B cell (primary cell): ENCODE measurements at regions of chr16 and their contacts with region 1.

Region 1: DNA sequence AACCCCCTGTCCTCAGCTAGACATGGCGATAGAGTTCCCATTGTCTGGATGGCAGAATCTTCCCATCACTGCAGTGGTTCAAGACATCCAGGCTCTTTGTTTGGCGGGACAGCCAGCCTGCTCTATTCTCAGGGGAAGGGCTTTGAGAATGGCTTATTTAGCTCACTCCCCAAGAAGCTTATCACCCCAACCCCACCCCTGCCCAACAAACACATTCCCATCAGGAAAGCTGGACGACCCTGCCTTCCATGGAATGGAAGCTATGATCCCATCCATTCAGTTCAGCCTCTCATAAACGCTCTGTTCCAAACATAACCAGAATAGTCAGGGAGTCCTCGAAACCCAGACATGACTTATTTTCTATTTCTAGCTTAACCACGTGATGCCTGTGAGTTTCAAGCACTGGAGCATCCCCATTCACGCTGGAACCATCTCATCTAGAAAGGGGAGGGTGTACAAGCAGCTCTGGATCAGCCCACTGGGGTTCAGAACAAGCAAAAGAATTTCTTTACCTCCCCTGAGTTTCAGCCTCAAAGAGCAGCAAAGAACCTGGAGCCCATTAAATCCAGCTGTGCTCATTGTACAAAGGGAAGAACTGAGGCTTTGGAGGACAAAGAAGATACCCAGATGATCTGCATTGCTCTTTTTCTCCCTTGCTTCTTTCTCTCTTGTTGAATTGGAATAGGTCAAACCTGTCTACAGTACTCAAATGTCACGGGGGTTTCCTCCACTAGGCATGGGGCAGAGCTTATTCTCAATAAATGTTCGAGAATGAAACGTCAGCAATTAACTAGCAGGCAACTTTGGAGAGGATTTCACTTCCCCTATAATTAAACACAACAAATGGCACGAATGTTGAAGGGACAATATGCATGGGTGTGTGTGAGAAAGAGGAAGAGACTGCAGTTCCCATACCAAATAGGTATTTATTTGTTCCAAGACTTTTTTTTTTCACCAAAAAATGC is 93.1 kb downstream of the XYLT1 start:
- DNase-seq: peak; percentile 90
- ATAC-seq: peak; percentile 90
- H3K4me3 ChIP-seq: peak overlapping the region in 2 of 5 experiments; percentile 27 to 30
- H3K4me3 Mint-ChIP-seq: peak overlapping the region; percentile 66
- H3K27ac ChIP-seq: peak overlapping the region; percentile 84 to 89
- H3K27ac Mint-ChIP-seq: peak overlapping the region; percentile 77
- H3K4me1 ChIP-seq: peaks cover 61 to 81% of the 10 kb centered on the region in 2 donors
- H3K4me1 Mint-ChIP-seq: peaks cover 72% of the 10 kb centered on the region
- H3K27me3 ChIP-seq: no peaks in the 10 kb centered on the region
- H3K27me3 Mint-ChIP-seq: no peaks in the 10 kb centered on the region
- CTCF ChIP-seq: no peak

Region 2: DNA sequence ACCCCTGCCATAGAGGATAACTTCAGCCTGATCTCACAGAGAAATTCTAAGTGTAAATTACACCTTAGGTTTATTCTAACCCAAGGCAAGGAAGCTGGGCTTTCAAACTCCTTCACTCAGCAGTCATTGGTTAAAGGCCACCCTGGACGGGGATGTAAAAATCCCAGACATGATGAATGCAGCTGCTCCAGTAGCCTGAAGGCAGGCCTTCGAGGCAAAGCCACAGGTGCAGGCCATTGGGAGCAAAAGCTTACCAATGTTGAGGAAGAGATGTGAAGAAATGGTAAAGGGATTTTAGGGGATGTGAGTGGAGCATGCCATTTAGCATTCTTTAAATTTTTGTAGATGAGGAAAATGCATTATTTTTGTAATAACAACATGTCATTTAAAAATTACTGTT is 421.3 kb before region 1 on chr16:
- CTCF ChIA-PET with region 1: no interaction called
- POLR2A ChIA-PET with region 1: no interaction called
- intact Hi-C with region 1: no loop called
- DNase-seq: no peak
- ATAC-seq: no peak
- H3K4me3 ChIP-seq: no peak overlapping the region
- H3K4me3 Mint-ChIP-seq: no peak overlapping the region
- H3K27ac ChIP-seq: no peak overlapping the region
- H3K27ac Mint-ChIP-seq: no peak overlapping the region
- H3K4me1 ChIP-seq: no peaks in the 10 kb centered on the region
- H3K4me1 Mint-ChIP-seq: no peaks in the 10 kb centered on the region
- H3K27me3 ChIP-seq: peaks cover 0 to 5% (median 0%) of the 10 kb centered on the region in 4 experiments
- H3K27me3 Mint-ChIP-seq: peaks cover 9% of the 10 kb centered on the region
- CTCF ChIP-seq: no peak

Region 3: DNA sequence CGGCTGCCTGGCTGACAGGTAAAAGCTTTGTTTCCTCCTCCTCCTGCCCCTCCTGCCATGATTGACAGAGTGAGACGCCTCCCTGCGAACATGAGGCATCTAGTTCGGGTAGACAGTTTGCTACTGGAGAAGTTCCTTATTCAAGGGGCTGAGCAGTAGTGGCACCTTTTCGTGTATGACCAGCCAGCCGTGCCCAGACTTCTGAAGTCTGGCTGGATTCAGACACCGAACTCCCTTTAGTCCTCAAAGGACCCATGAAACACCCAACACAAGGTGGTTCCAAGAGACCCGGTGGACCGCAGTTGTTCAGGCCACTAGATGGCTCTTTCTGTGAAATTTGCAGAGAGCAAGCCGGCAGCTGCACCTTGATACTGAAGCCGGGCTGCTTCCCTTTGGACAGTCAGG is 99.7 kb before region 1 on chr16:
- CTCF ChIA-PET with region 1: interaction called, 11 read pairs
- POLR2A ChIA-PET with region 1: no interaction called
- intact Hi-C with region 1: no loop called
- DNase-seq: peak; percentile 69
- ATAC-seq: peak; percentile 60
- H3K4me3 ChIP-seq: peak overlapping the region in 1 of 5 experiments; percentile 20
- H3K4me3 Mint-ChIP-seq: peak overlapping the region; percentile 35
- H3K27ac ChIP-seq: no peak overlapping the region
- H3K27ac Mint-ChIP-seq: no peak overlapping the region
- H3K4me1 ChIP-seq: peaks cover 59 to 60% of the 10 kb centered on the region in 2 donors
- H3K4me1 Mint-ChIP-seq: peaks cover 77% of the 10 kb centered on the region
- H3K27me3 ChIP-seq: no peaks in the 10 kb centered on the region
- H3K27me3 Mint-ChIP-seq: no peaks in the 10 kb centered on the region
- CTCF ChIP-seq: peak; percentile 53

Region 4: DNA sequence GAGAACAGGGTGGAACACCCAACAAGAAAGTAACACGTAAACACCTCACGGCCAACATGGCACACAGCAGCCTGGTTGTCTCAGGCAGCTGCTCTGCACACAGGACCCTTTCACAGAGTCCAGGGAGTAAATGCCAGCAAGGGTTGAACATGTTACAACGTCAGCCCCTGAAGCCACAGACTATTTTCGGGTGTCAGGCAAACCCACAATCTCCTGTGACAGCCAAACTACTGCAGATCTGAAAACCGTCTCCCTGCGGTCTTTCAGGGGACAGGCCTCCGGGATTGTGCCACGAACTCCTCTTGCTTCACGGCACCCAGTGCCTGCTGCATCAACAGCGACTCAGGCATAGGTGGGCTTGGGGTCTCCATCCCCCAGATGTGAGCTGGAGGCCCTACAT is 34.6 kb before region 1 on chr16:
- CTCF ChIA-PET with region 1: interaction called, 4 read pairs
- POLR2A ChIA-PET with region 1: no interaction called
- intact Hi-C with region 1: loop called (anchors 2 kb)
- DNase-seq: peak; percentile 69
- ATAC-seq: peak; percentile 63
- H3K4me3 ChIP-seq: peak overlapping the region in 2 of 5 experiments; percentile 14 to 17
- H3K4me3 Mint-ChIP-seq: peak overlapping the region; percentile 66
- H3K27ac ChIP-seq: peak overlapping the region; percentile 62 to 72
- H3K27ac Mint-ChIP-seq: peak overlapping the region; percentile 87
- H3K4me1 ChIP-seq: peaks cover 73 to 80% of the 10 kb centered on the region in 2 donors
- H3K4me1 Mint-ChIP-seq: peaks cover 68% of the 10 kb centered on the region
- H3K27me3 ChIP-seq: no peaks in the 10 kb centered on the region
- H3K27me3 Mint-ChIP-seq: no peaks in the 10 kb centered on the region
- CTCF ChIP-seq: no peak

Region 5: GRCh38 chr16:17364319-17365210 is 13.1 kb before region 1 on chr16:
- CTCF ChIA-PET with region 1: interaction called, 18 read pairs
- POLR2A ChIA-PET with region 1: interaction called, 6 read pairs
- intact Hi-C with region 1: loop called (anchors 1 kb)
- DNase-seq: peak; percentile 58
- ATAC-seq: no peak
- H3K4me3 ChIP-seq: no peak overlapping the region
- H3K4me3 Mint-ChIP-seq: peak overlapping the region; percentile 40
- H3K27ac ChIP-seq: peak overlapping the region; percentile 18 to 93
- H3K27ac Mint-ChIP-seq: peak overlapping the region; percentile 23
- H3K4me1 ChIP-seq: peaks cover 99 to 100% of the 10 kb centered on the region in 2 donors
- H3K4me1 Mint-ChIP-seq: peaks cover 93% of the 10 kb centered on the region
- H3K27me3 ChIP-seq: no peaks in the 10 kb centered on the region
- H3K27me3 Mint-ChIP-seq: no peaks in the 10 kb centered on the region
- CTCF ChIP-seq: no peak

Region 6: DNA sequence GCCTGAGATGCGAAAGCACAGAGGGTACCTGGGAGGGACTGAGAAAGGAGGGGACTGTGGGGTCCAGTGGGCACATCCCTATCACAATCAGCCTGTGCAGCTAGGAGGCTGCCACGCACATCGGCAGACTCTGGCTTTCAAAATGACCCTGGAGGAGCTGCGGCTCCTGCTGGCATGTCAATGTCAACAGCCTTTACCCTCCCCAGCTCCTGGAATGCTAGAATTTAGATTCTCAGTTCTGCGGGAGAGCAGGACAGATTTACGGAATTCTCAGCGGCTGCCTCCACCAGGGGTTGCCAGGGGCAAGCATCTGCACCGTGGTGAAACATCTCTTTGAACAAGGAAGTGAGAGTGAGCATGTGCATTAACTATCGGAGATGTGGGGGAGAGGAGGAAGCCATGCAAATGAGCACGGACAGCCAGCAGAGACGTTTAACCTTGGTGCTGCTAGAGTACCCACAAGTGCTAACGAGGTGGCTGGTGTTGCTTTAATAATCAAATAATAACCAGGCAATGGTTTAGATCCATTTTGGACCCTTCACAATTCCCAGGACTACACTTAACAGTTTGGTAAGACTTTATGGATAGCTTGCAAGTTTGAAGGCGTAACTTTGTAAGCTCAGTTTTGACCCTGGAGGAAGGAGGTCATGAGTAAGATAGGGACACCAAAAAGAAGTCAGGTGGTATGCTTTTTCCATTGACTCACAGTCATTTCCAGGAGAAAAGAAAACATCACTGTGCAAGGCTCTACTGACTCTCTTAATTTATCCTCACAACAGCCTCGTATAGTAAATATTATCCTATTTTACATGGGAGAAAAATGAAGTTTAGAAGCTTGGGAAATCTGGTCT is 39.0 kb after region 1 on chr16:
- CTCF ChIA-PET with region 1: interaction called, 4 read pairs
- POLR2A ChIA-PET with region 1: interaction called, 5 read pairs
- intact Hi-C with region 1: loop called (anchors 1 kb)
- DNase-seq: peak; percentile 90
- ATAC-seq: peak; percentile 91
- H3K4me3 ChIP-seq: peak overlapping the region; percentile 2 to 61 (median 40)
- H3K4me3 Mint-ChIP-seq: peak overlapping the region; percentile 85
- H3K27ac ChIP-seq: peak overlapping the region; percentile 76 to 81
- H3K27ac Mint-ChIP-seq: peak overlapping the region; percentile 90
- H3K4me1 ChIP-seq: peaks cover 61 to 68% of the 10 kb centered on the region in 2 donors
- H3K4me1 Mint-ChIP-seq: peaks cover 69% of the 10 kb centered on the region
- H3K27me3 ChIP-seq: no peaks in the 10 kb centered on the region
- H3K27me3 Mint-ChIP-seq: no peaks in the 10 kb centered on the region
- CTCF ChIP-seq: peak; percentile 68

Region 7: GRCh38 chr16:17459530-17460521 is 82.2 kb after region 1 on chr16:
- CTCF ChIA-PET with region 1: interaction called, 4 read pairs
- POLR2A ChIA-PET with region 1: interaction called, 3 read pairs
- intact Hi-C with region 1: loop called (anchors 5 kb)
- DNase-seq: peak; percentile 73
- ATAC-seq: peak; percentile 81
- H3K4me3 ChIP-seq: peak overlapping the region in 1 of 5 experiments; percentile 19
- H3K4me3 Mint-ChIP-seq: peak overlapping the region; percentile 84
- H3K27ac ChIP-seq: peak overlapping the region in 1 of 2 donors; percentile 15
- H3K27ac Mint-ChIP-seq: peak overlapping the region; percentile 79
- H3K4me1 ChIP-seq: peaks cover 48 to 50% of the 10 kb centered on the region in 2 donors
- H3K4me1 Mint-ChIP-seq: peaks cover 56% of the 10 kb centered on the region
- H3K27me3 ChIP-seq: no peaks in the 10 kb centered on the region
- H3K27me3 Mint-ChIP-seq: no peaks in the 10 kb centered on the region
- CTCF ChIP-seq: no peak